ENCODE measurements at regions of chr6 and their contacts with region 1.

Region 1: DNA sequence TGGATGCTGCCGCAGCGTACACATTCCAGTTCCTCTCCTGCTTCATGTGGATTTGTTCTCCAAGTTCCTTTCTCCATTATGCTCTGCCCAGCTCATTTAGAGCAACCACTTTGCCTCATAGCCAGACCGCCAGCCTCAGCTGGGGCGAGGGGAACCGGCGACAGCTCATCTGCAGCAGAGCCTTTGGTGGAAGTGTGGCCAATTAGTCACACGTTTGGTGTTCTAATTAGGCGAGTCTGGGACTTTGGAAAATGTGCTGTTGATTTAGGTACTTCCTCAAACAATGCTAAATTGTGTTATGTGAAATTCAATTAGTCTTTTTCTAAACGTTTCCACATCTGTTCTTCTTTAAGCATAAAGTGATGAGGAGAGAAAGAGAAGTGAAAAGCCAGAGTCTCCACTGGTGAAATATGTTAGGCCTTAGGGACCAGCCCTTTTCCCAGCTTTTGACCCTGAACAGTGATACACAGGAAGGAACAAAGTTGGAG is 217.9 kb downstream of the TBX18 start:
- DNase-seq: no peak
- H3K4me3 ChIP-seq: no peak overlapping the region
- H3K27ac ChIP-seq: no peak overlapping the region
- H3K4me1 ChIP-seq: no peaks in the 10 kb centered on the region
- H3K27me3 ChIP-seq: no peaks in the 10 kb centered on the region
- CTCF ChIP-seq: no peak

Region 2: DNA sequence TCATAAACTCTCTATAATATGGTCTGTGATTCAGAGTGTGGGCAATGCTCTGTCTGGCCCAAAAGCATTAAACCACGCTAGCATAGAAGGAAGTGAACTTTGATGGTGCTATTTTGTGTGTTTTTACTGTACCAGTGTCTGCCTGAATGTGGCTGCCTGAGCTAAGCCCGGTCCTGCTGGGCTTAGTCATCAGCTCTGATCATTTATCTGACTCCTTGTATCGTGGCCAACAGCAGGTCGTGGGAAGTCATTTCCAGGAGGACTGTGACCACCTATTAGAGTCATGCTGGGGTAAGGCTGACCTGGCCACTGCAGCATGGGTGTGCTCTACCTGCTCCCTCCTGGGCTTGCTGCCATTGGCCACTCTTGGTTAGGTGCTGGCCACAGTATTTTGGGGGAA is 80.0 kb before region 1 on chr6:
- CTCF ChIA-PET with region 1: no interaction called
- POLR2A ChIA-PET with region 1: interaction called, 3 read pairs
- intact Hi-C with region 1: loop called (anchors 10 kb)
- DNase-seq: peak; percentile 69 to 89
- H3K4me3 ChIP-seq: peak overlapping the region; percentile 33; the same call in 1 of the 2 replicates
- H3K27ac ChIP-seq: peak overlapping the region; percentile 75
- H3K4me1 ChIP-seq: peaks cover 31% of the 10 kb centered on the region
- H3K27me3 ChIP-seq: no peaks in the 10 kb centered on the region
- CTCF ChIP-seq: no peak

Region 3: GRCh38 chr6:84681693-84682326 is 135.3 kb after region 1 on chr6:
- CTCF ChIA-PET with region 1: no interaction called
- POLR2A ChIA-PET with region 1: no interaction called
- intact Hi-C with region 1: no loop called
- DNase-seq: no peak
- H3K4me3 ChIP-seq: no peak overlapping the region
- H3K27ac ChIP-seq: no peak overlapping the region
- H3K4me1 ChIP-seq: no peaks in the 10 kb centered on the region
- H3K27me3 ChIP-seq: no peaks in the 10 kb centered on the region
- CTCF ChIP-seq: no peak

Region 4: GRCh38 chr6:84764332-84765049 is 218.0 kb after region 1 on chr6 and contains the start of gene TBX18:
- CTCF ChIA-PET with region 1: no interaction called
- POLR2A ChIA-PET with region 1: no interaction called
- intact Hi-C with region 1: loop called (anchors 10 kb)
- DNase-seq: peak in 1 of 2 experiments; percentile 32
- H3K4me3 ChIP-seq: no peak within 1 kb of the TSS
- H3K27ac ChIP-seq: no peak within 1 kb of the TSS
- H3K4me1 ChIP-seq: no peaks in the 10 kb centered on the region
- H3K27me3 ChIP-seq: no peaks in the 10 kb centered on the region
- CTCF ChIP-seq: no peak
- total RNA-seq, gene TBX18: not detected in 2 replicates

Measured in PC-9 (cell line).